CD8-positive, alpha-beta T cell (primary cell): ENCODE measurements at regions of chr19 and their contacts with region 1.

Region 1: GRCh38 chr19:58362272-58362994 is at the start of gene ZNF497:
- DNase-seq: peak; percentile 95 to 99 (median 97)
- ATAC-seq: peak; percentile 86
- H3K4me3 ChIP-seq: peak within 1 kb of the TSS; percentile 71 to 78
- H3K4me3 Mint-ChIP-seq: peak within 1 kb of the TSS; percentile 95
- H3K27ac ChIP-seq: peak within 1 kb of the TSS; percentile 82 to 84
- H3K27ac Mint-ChIP-seq: peak within 1 kb of the TSS; percentile 92
- H3K4me1 ChIP-seq: peaks cover 18% of the 10 kb centered on the region
- H3K4me1 Mint-ChIP-seq: peaks cover 23% of the 10 kb centered on the region
- H3K27me3 ChIP-seq: no peaks in the 10 kb centered on the region
- H3K27me3 Mint-ChIP-seq: no peaks in the 10 kb centered on the region
- CTCF ChIP-seq: no peak
- total RNA-seq, gene ZNF497: 0.79 to 1.2 TPM

Region 2: GRCh38 chr19:58182989-58183816 is 179.2 kb before region 1 on chr19 and contains the start of gene ZNF274:
- CTCF ChIA-PET with region 1: interaction called, 3 read pairs
- POLR2A ChIA-PET with region 1: interaction called, 3 read pairs
- intact Hi-C with region 1: loop called (anchors 1 to 2 kb)
- DNase-seq: peak; percentile 88 to 96 (median 94)
- ATAC-seq: peak; percentile 86
- H3K4me3 ChIP-seq: peak within 1 kb of the TSS; percentile 90 to 94
- H3K4me3 Mint-ChIP-seq: peak within 1 kb of the TSS; percentile 91
- H3K27ac ChIP-seq: peak within 1 kb of the TSS; percentile 99 to 100
- H3K27ac Mint-ChIP-seq: peak within 1 kb of the TSS; percentile 100
- H3K4me1 ChIP-seq: peaks cover 9% of the 10 kb centered on the region
- H3K4me1 Mint-ChIP-seq: peaks cover 22% of the 10 kb centered on the region
- H3K27me3 ChIP-seq: no peaks in the 10 kb centered on the region
- H3K27me3 Mint-ChIP-seq: no peaks in the 10 kb centered on the region
- CTCF ChIP-seq: no peak
- total RNA-seq, gene ZNF274: 52.7 to 58.9 TPM

Region 3: DNA sequence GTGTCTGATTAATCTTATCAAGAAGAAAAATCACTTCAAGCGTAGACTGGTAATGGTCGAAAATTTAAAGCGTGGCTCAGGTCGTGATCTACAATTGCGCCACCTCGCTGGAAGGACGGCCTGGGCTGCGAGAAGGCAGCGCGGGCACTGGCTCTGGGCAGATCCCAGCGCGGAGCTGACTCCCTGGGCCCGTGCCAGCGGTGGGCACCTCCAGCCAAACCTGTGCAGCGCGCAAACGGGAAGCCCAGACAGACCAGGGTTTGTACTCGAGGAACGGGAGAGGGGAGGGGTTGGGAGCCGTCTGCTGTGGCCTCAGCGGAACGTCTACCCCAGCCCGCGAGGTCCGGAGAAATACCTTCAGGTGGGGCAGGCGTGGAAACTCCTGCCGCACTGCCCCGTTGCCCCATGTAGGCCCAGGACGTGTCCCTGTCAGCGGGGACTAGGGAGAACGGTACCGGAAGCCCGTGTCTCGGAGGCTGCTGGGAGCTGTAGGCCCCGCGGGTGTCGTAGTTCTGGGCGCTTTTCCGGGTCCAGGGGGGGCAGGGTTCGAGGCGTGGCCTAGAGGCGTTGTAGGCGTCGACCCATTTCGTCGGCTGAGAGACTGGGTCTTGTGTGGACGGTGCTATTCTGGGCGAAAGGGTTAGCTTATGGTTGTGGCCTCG is 158.5 kb before region 1 on chr19:
- CTCF ChIA-PET with region 1: no interaction called
- POLR2A ChIA-PET with region 1: no interaction called
- intact Hi-C with region 1: no loop called
- DNase-seq: no peak
- ATAC-seq: no peak
- H3K4me3 ChIP-seq: no peak overlapping the region
- H3K4me3 Mint-ChIP-seq: no peak overlapping the region
- H3K27ac ChIP-seq: no peak overlapping the region
- H3K27ac Mint-ChIP-seq: no peak overlapping the region
- H3K4me1 ChIP-seq: no peaks in the 10 kb centered on the region
- H3K4me1 Mint-ChIP-seq: peaks cover 3% of the 10 kb centered on the region
- H3K27me3 ChIP-seq: no peaks in the 10 kb centered on the region
- H3K27me3 Mint-ChIP-seq: no peaks in the 10 kb centered on the region
- CTCF ChIP-seq: no peak

Region 4: GRCh38 chr19:58243351-58243750 is 119.1 kb before region 1 on chr19:
- CTCF ChIA-PET with region 1: no interaction called
- POLR2A ChIA-PET with region 1: no interaction called
- intact Hi-C with region 1: no loop called
- DNase-seq: no peak
- ATAC-seq: no peak
- H3K4me3 ChIP-seq: no peak overlapping the region
- H3K4me3 Mint-ChIP-seq: no peak overlapping the region
- H3K27ac ChIP-seq: no peak overlapping the region
- H3K27ac Mint-ChIP-seq: no peak overlapping the region
- H3K4me1 ChIP-seq: no peaks in the 10 kb centered on the region
- H3K4me1 Mint-ChIP-seq: no peaks in the 10 kb centered on the region
- H3K27me3 ChIP-seq: no peaks in the 10 kb centered on the region
- H3K27me3 Mint-ChIP-seq: no peaks in the 10 kb centered on the region
- CTCF ChIP-seq: no peak

Region 5: DNA sequence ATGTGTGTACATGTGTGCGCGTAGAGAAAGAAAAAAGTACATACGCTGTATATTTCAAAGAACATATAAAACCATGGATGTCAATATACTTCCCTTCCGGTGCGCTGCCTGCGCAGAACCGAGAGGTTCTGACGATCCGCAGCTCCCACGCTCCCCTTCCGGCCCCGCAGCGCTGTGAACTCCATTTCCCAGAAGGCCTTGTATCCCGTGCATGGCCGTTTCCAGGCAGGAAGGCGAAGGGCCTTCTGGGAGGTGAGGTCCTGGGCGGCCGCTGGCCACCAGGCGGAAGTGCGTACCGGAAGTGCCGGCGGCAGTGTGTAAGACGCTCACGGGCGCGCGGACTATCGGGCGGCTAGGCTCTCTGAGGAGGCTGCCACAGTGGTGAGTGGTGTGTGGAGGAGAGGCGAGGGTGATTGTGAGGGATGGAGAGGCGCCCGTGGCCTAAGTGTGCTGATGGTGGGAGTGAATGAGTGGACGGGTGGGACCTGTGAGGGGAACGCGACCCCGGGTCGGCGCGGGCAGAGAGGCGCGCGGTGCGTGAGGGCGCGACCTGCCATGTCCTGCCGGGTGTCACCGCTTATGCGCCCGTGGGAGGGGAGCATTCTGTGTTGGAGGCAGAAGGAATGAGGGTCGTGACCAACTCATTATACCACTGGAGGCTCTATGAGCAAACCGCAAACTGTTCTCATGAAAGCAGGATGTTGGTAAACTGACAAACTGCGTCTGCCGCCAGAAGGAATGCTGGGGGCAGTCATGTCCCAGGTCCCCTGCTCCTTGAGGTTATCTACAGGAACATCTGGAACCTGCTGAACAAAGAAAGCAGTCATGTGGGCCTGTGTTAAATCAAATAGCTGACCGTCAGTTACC is 57.1 kb before region 1 on chr19 and contains the start of gene ERVK3-1:
- CTCF ChIA-PET with region 1: no interaction called
- POLR2A ChIA-PET with region 1: interaction called, 6 read pairs
- intact Hi-C with region 1: loop called (anchors 1 kb)
- DNase-seq: peak; percentile 89 to 99 (median 93)
- ATAC-seq: peak; percentile 96
- H3K4me3 ChIP-seq: peak within 1 kb of the TSS; percentile 82 to 89
- H3K4me3 Mint-ChIP-seq: peak within 1 kb of the TSS; percentile 98
- H3K27ac ChIP-seq: peak within 1 kb of the TSS; percentile 93 to 95
- H3K27ac Mint-ChIP-seq: peak within 1 kb of the TSS; percentile 99
- H3K4me1 ChIP-seq: peaks cover 27% of the 10 kb centered on the region
- H3K4me1 Mint-ChIP-seq: peaks cover 53% of the 10 kb centered on the region
- H3K27me3 ChIP-seq: no peaks in the 10 kb centered on the region
- H3K27me3 Mint-ChIP-seq: no peaks in the 10 kb centered on the region
- CTCF ChIP-seq: no peak
- total RNA-seq, gene ERVK3-1: 174 to 182 TPM

Region 6: GRCh38 chr19:58346961-58347931 is 15.2 kb before region 1 on chr19:
- CTCF ChIA-PET with region 1: interaction called, 3 read pairs
- POLR2A ChIA-PET with region 1: interaction called, 38 read pairs
- intact Hi-C with region 1: loop called (anchors 1 kb)
- DNase-seq: peak; percentile 41 to 86 (median 71)
- ATAC-seq: peak; percentile 90
- H3K4me3 ChIP-seq: peak overlapping the region; percentile 72 to 95
- H3K4me3 Mint-ChIP-seq: peak overlapping the region; percentile 91
- H3K27ac ChIP-seq: peak overlapping the region; percentile 63 to 85
- H3K27ac Mint-ChIP-seq: peak overlapping the region; percentile 93
- H3K4me1 ChIP-seq: peaks cover 17% of the 10 kb centered on the region
- H3K4me1 Mint-ChIP-seq: peaks cover 35% of the 10 kb centered on the region
- H3K27me3 ChIP-seq: no peaks in the 10 kb centered on the region
- H3K27me3 Mint-ChIP-seq: no peaks in the 10 kb centered on the region
- CTCF ChIP-seq: no peak

Region 7: GRCh38 chr19:58400916-58401839 is 38.7 kb after region 1 on chr19:
- CTCF ChIA-PET with region 1: no interaction called
- POLR2A ChIA-PET with region 1: interaction called, 3 read pairs
- intact Hi-C with region 1: loop called (anchors 1 kb)
- DNase-seq: peak; percentile 97 to 100 (median 99)
- ATAC-seq: peak; percentile 97
- H3K4me3 ChIP-seq: peak overlapping the region; percentile 72 to 77
- H3K4me3 Mint-ChIP-seq: peak overlapping the region; percentile 93
- H3K27ac ChIP-seq: peak overlapping the region; percentile 93 to 94
- H3K27ac Mint-ChIP-seq: peak overlapping the region; percentile 96
- H3K4me1 ChIP-seq: peaks cover 12% of the 10 kb centered on the region
- H3K4me1 Mint-ChIP-seq: peaks cover 15% of the 10 kb centered on the region
- H3K27me3 ChIP-seq: peaks cover 0 to 4% of the 10 kb centered on the region in 2 experiments
- H3K27me3 Mint-ChIP-seq: peaks cover 10% of the 10 kb centered on the region
- CTCF ChIP-seq: no peak

Region 8: DNA sequence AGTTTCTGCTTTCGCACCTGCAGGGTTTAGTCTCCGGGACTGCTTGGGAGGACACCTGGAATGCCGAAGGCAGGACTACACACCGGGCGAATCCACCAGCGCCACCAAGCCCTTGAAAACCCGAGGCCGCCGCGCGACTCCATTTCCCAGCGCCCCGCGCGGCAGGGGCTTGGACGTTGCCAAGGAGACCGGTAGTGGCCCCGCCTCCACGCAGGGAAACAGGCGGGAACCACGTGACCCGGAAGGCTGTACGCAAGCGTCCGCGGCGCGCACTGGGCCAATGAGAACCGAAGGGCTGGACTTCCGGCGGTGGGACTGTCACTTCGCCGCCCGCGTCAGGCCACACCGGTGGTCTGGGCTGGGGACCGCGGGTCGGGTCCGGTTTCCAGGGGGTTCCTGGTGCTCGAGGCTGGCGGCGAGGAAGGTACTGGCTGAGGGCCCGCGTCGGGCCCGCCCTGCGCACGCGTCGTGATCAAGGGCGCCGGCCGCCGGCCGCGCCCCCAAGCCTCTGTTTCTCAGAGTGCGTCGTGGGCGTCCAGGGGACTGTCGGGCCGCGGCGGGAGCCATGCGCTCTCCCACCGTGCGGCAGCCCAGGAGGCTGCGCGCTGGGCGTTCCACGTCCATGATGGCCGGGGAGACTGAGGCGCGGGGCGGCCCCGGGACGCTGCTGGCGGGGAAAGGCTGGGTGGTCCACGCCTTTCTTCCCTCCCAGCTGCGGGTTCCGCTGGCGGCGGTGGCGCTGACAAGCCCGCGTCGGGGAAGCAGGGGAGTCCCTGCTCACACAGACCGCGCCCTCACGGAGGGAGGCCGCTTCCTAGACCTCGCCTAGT is 104.5 kb after region 1 on chr19 and contains the start of gene ZNF324:
- CTCF ChIA-PET with region 1: no interaction called
- POLR2A ChIA-PET with region 1: no interaction called
- intact Hi-C with region 1: loop called in 1 of 2 experiments (anchors 1 kb)
- DNase-seq: peak; percentile 93 to 99 (median 98)
- ATAC-seq: peak; percentile 88
- H3K4me3 ChIP-seq: peak within 1 kb of the TSS; percentile 63 to 93
- H3K4me3 Mint-ChIP-seq: peak within 1 kb of the TSS; percentile 87
- H3K27ac ChIP-seq: peak within 1 kb of the TSS; percentile 88 to 91
- H3K27ac Mint-ChIP-seq: peak within 1 kb of the TSS; percentile 89
- H3K4me1 ChIP-seq: peaks cover 10% of the 10 kb centered on the region
- H3K4me1 Mint-ChIP-seq: peaks cover 25% of the 10 kb centered on the region
- H3K27me3 ChIP-seq: peaks cover 0 to 3% of the 10 kb centered on the region in 2 experiments
- H3K27me3 Mint-ChIP-seq: no peaks in the 10 kb centered on the region
- CTCF ChIP-seq: no peak
- total RNA-seq, gene ZNF324: 26.9 to 30.5 TPM

Region 9: DNA sequence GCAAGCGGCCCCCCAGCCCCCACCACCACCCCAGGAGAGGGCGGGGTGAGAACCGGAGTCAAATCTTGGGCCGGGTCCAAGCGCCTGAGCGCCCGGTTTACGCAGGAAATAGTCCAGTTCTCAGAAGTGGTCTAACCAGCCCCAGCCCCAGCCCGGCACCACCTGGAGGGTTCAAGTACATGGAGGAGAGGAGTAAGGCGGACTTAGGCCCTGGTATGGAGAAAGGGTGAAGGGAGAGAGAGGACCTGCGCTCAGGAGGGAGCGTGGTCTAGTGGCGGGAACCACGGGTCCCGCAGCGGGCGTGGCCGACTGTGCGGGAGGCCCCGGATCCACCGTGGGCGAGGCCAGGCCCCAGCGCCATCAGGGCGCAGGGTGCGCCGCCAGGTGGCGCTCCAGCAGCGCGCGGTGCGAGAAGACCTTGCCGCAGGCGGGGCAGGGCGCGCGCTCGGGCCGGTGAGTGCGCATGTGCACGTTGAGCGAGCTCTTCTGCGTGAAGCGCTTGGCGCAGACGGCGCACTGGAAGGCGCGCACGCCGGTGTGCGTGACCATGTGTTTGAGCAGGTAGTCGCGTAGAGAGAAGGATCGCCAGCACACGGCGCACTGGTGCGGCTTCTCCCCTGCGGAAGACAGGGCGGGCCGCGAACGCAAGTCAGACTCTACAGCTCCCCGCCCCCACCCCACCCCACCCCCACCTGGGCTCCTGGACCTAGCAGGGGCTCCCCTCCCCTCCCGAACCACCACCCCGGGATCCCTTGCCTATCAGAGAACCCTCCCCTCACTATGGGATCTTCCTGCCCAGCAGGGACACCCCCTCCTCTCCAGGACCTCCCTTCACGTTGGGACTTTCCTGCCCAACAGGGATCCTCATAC is 151.5 kb after region 1 on chr19:
- CTCF ChIA-PET with region 1: no interaction called
- POLR2A ChIA-PET with region 1: interaction called, 6 read pairs
- intact Hi-C with region 1: loop called in 1 of 2 experiments (anchors 5 kb)
- DNase-seq: peak; percentile 86 to 97 (median 94)
- ATAC-seq: peak; percentile 94
- H3K4me3 ChIP-seq: peak overlapping the region; percentile 10 to 32
- H3K4me3 Mint-ChIP-seq: peak overlapping the region; percentile 78
- H3K27ac ChIP-seq: peak overlapping the region; percentile 21 to 71
- H3K27ac Mint-ChIP-seq: peak overlapping the region; percentile 78
- H3K4me1 ChIP-seq: peaks cover 25% of the 10 kb centered on the region
- H3K4me1 Mint-ChIP-seq: peaks cover 35% of the 10 kb centered on the region
- H3K27me3 ChIP-seq: no peaks in the 10 kb centered on the region
- H3K27me3 Mint-ChIP-seq: no peaks in the 10 kb centered on the region
- CTCF ChIP-seq: peak; percentile 85